Activated CD4-positive, alpha-beta T cell treated with anti-CD3 and anti-CD28 coated beads for 36 hours (primary cell): ENCODE measurements at regions of chr19 and their contacts with region 1.

Region 1: DNA sequence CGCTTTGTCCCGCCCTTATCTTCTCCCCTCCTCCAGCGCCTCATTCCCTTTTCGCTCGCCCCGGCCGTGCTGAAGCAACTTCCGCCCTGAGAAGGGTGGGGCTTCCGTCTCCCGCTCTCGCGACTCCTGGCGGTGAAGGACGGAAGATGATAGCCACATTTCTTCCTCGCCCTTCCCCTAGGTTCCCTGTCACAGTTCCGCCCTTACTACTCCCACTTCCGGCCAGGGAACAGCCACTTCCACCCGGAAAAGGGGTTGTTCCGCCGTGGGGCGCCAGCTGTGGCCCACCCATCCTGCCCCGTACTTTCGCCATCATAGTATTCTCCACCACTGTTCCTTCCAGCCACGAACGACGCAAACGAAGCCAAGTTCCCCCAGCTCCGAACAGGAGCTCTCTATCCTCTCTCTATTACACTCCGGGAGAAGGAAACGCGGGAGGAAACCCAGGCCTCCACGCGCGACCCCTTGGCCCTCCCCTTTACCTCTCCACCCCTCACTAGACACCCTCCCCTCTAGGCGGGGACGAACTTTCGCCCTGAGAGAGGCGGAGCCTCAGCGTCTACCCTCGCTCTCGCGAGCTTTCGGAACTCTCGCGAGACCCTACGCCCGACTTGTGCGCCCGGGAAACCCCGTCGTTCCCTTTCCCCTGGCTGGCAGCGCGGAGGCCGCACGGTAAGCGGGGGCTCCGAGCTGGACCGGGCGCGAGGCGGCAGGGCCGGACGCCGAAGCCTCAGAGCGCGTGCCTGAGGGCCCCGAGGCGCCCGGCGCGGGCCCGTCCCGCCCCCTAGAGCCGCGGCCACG is at the start of gene RPS19:
- DNase-seq: peak; percentile 99
- ATAC-seq: peak; percentile 89
- H3K4me3 Mint-ChIP-seq: peak within 1 kb of the TSS; percentile 86
- H3K27ac Mint-ChIP-seq: peak within 1 kb of the TSS; percentile 98
- H3K4me1 Mint-ChIP-seq: peaks cover 46% of the 10 kb centered on the region
- H3K27me3 Mint-ChIP-seq: no peaks in the 10 kb centered on the region
- total RNA-seq, gene RPS19: 2,342 to 3,204 TPM

Region 2: GRCh38 chr19:41353466-41354342 is 506.1 kb before region 1 on chr19 and contains the start of gene TGFB1:
- CTCF ChIA-PET with region 1: no interaction called
- POLR2A ChIA-PET with region 1: no interaction called
- intact Hi-C with region 1: loop called in 1 of 2 experiments (anchors 5 kb)
- DNase-seq: peak; percentile 96
- ATAC-seq: peak; percentile 45
- H3K4me3 Mint-ChIP-seq: peak within 1 kb of the TSS; percentile 96
- H3K27ac Mint-ChIP-seq: peak within 1 kb of the TSS; percentile 97
- H3K4me1 Mint-ChIP-seq: peaks cover 58% of the 10 kb centered on the region
- H3K27me3 Mint-ChIP-seq: no peaks in the 10 kb centered on the region
- total RNA-seq, gene TGFB1: 86.2 to 99.0 TPM

Region 3: GRCh38 chr19:41439441-41440222 is 420.2 kb before region 1 on chr19 and contains the start of gene DMAC2:
- CTCF ChIA-PET with region 1: no interaction called
- POLR2A ChIA-PET with region 1: no interaction called
- intact Hi-C with region 1: loop called in 1 of 2 experiments (anchors 1 kb)
- DNase-seq: peak; percentile 98
- ATAC-seq: peak; percentile 97
- H3K4me3 Mint-ChIP-seq: no peak within 1 kb of the TSS
- H3K27ac Mint-ChIP-seq: peak within 1 kb of the TSS; percentile 2
- H3K4me1 Mint-ChIP-seq: peaks cover 18% of the 10 kb centered on the region
- H3K27me3 Mint-ChIP-seq: peaks cover 2% of the 10 kb centered on the region
- total RNA-seq, gene DMAC2: 52.5 to 66.3 TPM

Region 4: DNA sequence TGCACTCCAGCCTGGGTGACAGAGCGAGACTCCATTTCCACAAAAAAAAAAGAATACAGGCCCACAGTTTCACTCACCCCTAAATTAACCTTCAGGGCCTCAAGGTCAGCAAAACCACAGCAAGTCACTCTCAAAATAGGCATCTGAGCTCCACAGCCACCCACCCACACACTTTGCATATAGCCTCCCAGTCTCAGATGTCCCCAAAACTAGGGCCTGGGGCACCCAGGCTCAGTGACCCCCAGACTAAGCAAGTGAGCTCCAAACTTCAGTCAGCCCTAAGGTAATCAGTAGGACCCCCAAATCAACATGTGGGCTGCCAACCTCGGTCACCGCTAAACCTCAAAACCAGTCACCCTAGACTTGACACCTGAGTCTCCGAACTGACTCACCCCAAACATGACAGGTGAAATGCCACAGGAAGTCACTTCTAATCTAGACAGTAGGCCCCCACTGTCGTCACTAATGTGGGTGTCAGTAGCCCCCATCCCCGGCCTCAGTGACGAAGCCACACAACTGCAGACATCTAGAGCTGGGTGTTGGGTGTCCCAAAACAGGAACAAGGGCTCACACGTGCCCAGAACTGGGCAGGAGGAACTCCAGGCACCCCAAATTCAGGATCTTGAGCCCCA is 85.4 kb after region 1 on chr19:
- CTCF ChIA-PET with region 1: interaction called, 13 read pairs
- POLR2A ChIA-PET with region 1: interaction called, 11 read pairs
- intact Hi-C with region 1: loop called in 1 of 2 experiments (anchors 1 kb)
- DNase-seq: peak; percentile 95
- ATAC-seq: peak; percentile 92
- H3K4me3 Mint-ChIP-seq: peak overlapping the region; percentile 41
- H3K27ac Mint-ChIP-seq: peak overlapping the region; percentile 96
- H3K4me1 Mint-ChIP-seq: peaks cover 50% of the 10 kb centered on the region
- H3K27me3 Mint-ChIP-seq: peaks cover 4% of the 10 kb centered on the region

Region 5: GRCh38 chr19:42075616-42076379 is 216.0 kb after region 1 on chr19 and contains the start of gene ZNF574:
- CTCF ChIA-PET with region 1: no interaction called
- POLR2A ChIA-PET with region 1: interaction called, 5 read pairs
- intact Hi-C with region 1: loop called in 1 of 2 experiments (anchors 1 kb)
- DNase-seq: peak; percentile 99
- ATAC-seq: peak; percentile 99
- H3K4me3 Mint-ChIP-seq: peak within 1 kb of the TSS; percentile 89
- H3K27ac Mint-ChIP-seq: peak within 1 kb of the TSS; percentile 99
- H3K4me1 Mint-ChIP-seq: peaks cover 27% of the 10 kb centered on the region
- H3K27me3 Mint-ChIP-seq: no peaks in the 10 kb centered on the region
- total RNA-seq, gene ZNF574: 10.7 to 14.8 TPM

Region 6: GRCh38 chr19:42283143-42284065 is 423.6 kb after region 1 on chr19:
- CTCF ChIA-PET with region 1: no interaction called
- POLR2A ChIA-PET with region 1: no interaction called
- intact Hi-C with region 1: loop called in 1 of 2 experiments (anchors 1 kb)
- DNase-seq: peak; percentile 98
- ATAC-seq: peak; percentile 62
- H3K4me3 Mint-ChIP-seq: no peak overlapping the region
- H3K27ac Mint-ChIP-seq: no peak overlapping the region
- H3K4me1 Mint-ChIP-seq: peaks cover 41% of the 10 kb centered on the region
- H3K27me3 Mint-ChIP-seq: no peaks in the 10 kb centered on the region